MCF 10A (cell line): ENCODE measurements at regions of chr6 and their contacts with region 1.

Region 1: DNA sequence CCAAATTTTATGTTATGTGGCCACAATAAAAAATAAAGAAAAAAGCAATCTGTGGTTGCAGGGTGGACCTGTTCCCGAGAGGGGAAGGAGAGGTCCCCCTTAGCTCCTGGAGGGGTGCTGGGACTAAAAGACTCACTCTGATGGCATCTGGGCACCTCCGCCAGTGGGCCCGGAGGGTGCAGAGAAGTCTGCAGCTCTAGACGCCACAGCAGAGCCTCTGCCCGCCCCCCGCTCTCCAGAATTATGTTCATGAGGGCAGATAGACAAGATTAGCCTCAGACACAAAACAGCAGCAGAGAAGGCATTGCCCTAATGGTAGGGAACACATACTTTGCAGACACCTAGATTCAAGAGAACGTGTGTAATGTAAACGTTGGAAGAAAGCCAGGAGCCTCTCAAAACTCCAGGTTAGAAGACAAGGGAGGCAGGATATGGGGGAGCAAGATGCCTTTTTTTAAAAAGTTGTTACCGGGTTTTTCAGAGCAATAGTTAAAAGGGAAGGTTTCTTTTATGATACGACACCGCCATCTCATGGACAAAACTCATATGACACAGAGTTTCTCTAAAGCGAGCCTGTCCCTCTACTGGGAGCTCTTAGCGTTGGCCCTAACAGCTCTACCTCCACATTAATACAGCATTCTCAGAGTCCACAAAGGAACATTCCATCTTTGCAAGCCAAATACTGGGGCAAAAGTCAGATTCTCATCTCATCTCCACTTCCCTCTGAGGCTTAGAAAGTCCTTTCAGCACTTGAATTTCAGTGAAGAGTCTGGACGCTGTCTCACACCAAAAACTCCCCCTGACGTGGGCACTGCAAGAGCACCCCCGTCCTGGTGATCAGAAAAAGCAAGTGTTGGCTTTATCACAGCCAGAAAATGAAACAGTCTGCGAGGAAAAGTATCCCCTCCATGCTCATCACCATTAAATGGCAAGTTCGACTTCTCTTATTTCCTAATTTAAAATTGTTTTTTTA is 47.2 kb downstream of the FOXF2 start:
- DNase-seq: peak; percentile 78
- H3K4me3 Mint-ChIP-seq: no peak overlapping the region
- H3K27ac Mint-ChIP-seq: no peak overlapping the region
- H3K4me1 Mint-ChIP-seq: peaks cover 19% of the 10 kb centered on the region
- H3K27me3 Mint-ChIP-seq: peaks cover 10% of the 10 kb centered on the region
- CTCF ChIP-seq: peak; percentile 84

Region 2: DNA sequence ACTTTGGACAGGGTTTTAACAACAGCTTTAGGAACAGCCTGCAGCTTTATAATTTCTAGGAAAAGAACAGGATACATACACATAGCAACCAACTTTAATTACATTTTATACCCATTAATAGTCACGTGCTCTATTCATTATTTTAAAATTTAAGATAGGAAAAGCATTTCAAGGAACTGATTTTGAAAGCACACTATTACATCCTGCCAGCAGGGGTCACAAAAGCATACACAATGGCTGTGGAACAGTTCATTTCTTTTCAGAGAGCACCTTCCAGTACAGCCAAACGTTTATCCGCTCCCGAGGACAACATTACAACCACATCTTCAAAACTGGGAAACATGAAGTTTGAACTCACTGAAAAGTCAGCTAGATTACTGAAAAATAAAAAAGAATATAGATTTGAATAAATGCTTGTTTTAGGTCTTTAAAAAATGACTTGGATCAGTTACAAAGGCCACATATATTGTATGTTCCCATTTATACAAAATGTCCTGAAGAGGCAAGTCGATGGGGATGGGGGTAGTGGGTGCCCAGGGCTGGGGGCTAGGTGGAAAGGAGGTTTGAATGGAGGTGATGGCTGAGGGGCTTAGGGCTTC is 639.0 kb before region 1 on chr6:
- CTCF ChIA-PET with region 1: interaction called, 5 read pairs
- POLR2A ChIA-PET with region 1: no interaction called
- intact Hi-C with region 1: loop called (anchors 1 kb)
- DNase-seq: peak; percentile 68
- H3K4me3 Mint-ChIP-seq: no peak overlapping the region
- H3K27ac Mint-ChIP-seq: no peak overlapping the region
- H3K4me1 Mint-ChIP-seq: no peaks in the 10 kb centered on the region
- H3K27me3 Mint-ChIP-seq: peaks cover 40% of the 10 kb centered on the region
- CTCF ChIP-seq: peak; percentile 83

Region 3: GRCh38 chr6:1363729-1364572 is 72.7 kb before region 1 on chr6:
- CTCF ChIA-PET with region 1: no interaction called
- POLR2A ChIA-PET with region 1: no interaction called
- intact Hi-C with region 1: loop called (anchors 1 kb)
- DNase-seq: peak; percentile 33
- H3K4me3 Mint-ChIP-seq: no peak overlapping the region
- H3K27ac Mint-ChIP-seq: no peak overlapping the region
- H3K4me1 Mint-ChIP-seq: no peaks in the 10 kb centered on the region
- H3K27me3 Mint-ChIP-seq: no peaks in the 10 kb centered on the region
- CTCF ChIP-seq: peak; percentile 42

Region 4: DNA sequence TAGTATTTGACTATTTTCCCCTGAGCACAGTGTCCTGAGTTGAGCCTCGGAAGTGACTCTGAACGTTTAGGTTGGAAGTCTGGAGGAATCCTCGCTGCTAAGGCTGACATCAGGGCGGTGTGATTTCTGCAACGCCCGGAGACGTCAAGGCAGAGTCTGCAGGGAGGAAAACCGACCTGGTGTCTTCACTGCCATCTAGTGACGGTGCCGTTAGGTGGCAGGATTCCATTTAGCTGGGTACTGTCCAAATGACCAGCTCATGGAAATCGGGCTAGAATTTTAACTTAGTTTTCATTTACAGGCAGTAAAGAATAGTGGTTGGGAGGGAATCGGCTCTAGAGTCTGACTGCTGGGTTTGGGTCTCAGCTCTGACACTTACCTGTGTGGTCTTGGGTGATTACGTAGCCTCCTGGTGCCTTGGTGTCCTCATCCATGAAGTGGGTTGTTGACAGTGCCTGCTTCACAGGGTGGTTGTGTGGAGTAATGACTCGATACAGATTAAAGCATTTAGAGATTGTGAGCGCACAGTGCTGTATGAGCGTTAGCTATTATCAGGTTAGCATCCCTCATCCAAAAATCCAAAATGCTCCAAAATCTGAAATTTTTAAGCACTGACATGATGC is 12.2 kb before region 1 on chr6:
- CTCF ChIA-PET with region 1: interaction called, 35 read pairs
- POLR2A ChIA-PET with region 1: no interaction called
- intact Hi-C with region 1: no loop called
- DNase-seq: peak; percentile 78
- H3K4me3 Mint-ChIP-seq: no peak overlapping the region
- H3K27ac Mint-ChIP-seq: no peak overlapping the region
- H3K4me1 Mint-ChIP-seq: peaks cover 6% of the 10 kb centered on the region
- H3K27me3 Mint-ChIP-seq: peaks cover 26% of the 10 kb centered on the region
- CTCF ChIP-seq: peak; percentile 69

Region 5: DNA sequence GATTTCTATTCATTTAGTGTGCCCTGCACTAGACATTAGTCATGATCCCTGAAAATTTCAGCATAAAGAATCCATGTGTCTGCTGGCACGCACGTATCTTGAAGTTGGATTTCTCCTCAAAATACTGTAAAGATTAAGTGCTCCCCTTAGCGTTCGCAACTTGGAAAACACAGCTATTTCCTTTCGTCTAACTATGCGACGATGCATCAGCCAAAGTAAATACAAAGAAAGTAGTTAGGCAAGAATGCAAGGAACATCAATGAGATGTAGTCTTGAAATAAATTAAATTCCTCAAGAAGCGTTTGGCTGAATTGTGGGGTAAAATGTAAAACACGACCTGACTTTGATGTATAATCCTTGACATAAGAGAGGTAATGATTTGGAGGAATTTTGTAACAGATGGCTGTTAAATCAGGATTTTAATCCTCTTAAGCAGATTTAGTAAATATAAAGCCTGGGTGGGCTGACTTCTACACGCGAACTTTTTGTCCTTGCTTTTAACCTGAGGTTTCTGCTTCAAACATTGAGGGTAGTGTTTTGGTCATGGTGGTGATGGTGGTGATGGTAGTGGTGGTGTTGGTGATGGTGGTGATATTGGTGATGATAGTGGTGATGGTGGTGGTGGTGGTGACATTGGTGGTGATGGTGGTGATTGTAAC is 40.9 kb after region 1 on chr6:
- CTCF ChIA-PET with region 1: interaction called, 9 read pairs
- POLR2A ChIA-PET with region 1: no interaction called
- intact Hi-C with region 1: loop called (anchors 2 kb)
- DNase-seq: peak; percentile 84
- H3K4me3 Mint-ChIP-seq: peak overlapping the region; percentile 47
- H3K27ac Mint-ChIP-seq: no peak overlapping the region
- H3K4me1 Mint-ChIP-seq: peaks cover 56% of the 10 kb centered on the region
- H3K27me3 Mint-ChIP-seq: no peaks in the 10 kb centered on the region
- CTCF ChIP-seq: no peak

Region 6: GRCh38 chr6:1535295-1535694 is 98.7 kb after region 1 on chr6:
- CTCF ChIA-PET with region 1: no interaction called
- POLR2A ChIA-PET with region 1: no interaction called
- intact Hi-C with region 1: no loop called
- DNase-seq: peak; percentile 63
- H3K4me3 Mint-ChIP-seq: no peak overlapping the region
- H3K27ac Mint-ChIP-seq: peak overlapping the region; percentile 49
- H3K4me1 Mint-ChIP-seq: peaks cover 4% of the 10 kb centered on the region
- H3K27me3 Mint-ChIP-seq: no peaks in the 10 kb centered on the region
- CTCF ChIP-seq: no peak

Region 7: DNA sequence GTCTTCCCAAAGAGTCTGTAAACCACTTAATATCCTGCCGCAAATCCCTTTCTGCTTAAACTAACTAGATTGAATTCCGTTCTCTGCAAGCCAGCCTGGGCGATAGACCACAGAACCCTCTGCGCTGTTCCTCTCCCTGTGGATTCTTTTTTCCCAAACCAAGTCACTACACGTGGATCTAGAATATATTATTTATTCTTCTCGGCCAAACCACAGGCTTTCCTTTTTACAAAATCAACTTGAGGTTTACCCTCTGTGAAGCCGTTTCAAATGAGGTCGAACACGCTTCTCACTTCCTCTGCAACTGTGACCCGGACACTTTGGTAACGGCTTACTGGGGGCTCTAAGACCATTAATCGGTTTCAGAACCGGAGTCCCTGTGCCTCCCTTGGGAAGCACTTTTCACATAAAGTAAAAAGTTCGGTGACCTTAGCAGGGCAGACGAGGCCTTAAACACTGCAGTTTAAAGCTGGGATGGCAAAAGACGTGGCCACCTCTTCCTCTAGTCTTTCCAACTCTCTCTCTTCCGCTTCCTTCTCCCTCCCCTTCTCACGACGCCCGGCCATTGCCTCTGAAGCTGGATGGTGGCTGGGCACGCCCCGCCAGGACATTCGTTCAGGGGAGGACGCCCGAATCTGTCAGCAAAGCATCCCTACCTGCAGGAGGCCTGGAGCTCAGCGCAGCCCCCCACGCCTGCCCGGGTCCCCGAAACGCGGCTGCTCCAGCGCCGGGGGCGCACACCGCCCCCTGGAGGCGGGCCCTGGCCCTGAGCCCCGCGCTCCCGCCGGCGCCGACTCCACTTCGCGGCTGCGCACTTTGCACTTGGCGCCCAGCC is 118.1 kb after region 1 on chr6:
- CTCF ChIA-PET with region 1: interaction called, 12 read pairs
- POLR2A ChIA-PET with region 1: interaction called, 6 read pairs
- intact Hi-C with region 1: no loop called
- DNase-seq: peak; percentile 74
- H3K4me3 Mint-ChIP-seq: peak overlapping the region; percentile 89
- H3K27ac Mint-ChIP-seq: peak overlapping the region; percentile 93
- H3K4me1 Mint-ChIP-seq: peaks cover 23% of the 10 kb centered on the region
- H3K27me3 Mint-ChIP-seq: no peaks in the 10 kb centered on the region
- CTCF ChIP-seq: peak; percentile 89

Region 8: DNA sequence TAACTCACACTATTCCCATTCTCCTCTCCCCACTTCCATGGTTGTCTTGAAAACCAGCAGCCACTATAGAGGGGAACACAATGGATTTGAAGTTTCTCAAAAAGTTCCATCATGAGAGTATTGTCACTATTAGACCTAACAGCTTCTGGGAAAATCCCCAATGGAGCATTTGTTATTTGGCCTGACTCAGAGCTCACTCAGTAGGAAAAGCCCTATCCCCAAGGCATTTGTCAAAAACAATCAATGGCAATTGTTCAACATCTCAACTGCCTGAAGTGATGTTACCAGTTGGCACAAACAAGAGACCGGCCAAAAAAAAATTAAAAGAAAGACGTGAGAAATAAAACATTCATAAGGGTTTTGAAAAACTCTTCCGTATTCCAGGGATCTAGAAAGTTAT is 1215.3 kb after region 1 on chr6:
- CTCF ChIA-PET with region 1: no interaction called
- POLR2A ChIA-PET with region 1: no interaction called
- intact Hi-C with region 1: no loop called
- DNase-seq: no peak
- H3K4me3 Mint-ChIP-seq: no peak overlapping the region
- H3K27ac Mint-ChIP-seq: no peak overlapping the region
- H3K4me1 Mint-ChIP-seq: no peaks in the 10 kb centered on the region
- H3K27me3 Mint-ChIP-seq: no peaks in the 10 kb centered on the region
- CTCF ChIP-seq: no peak